Activated CD4-positive, alpha-beta T cell treated with anti-CD3 and anti-CD28 coated beads, Interleukin-2, amount 10 ng/mL, durations not matched to agents 7 days and 5 days (primary cell): ENCODE measurements at regions of chr2 and their contacts with region 1.

Region 1: GRCh38 chr2:37550190-37550589 is 121.3 kb downstream of the CDC42EP3 start:
- DNase-seq: no peak
- H3K4me3 Mint-ChIP-seq: no peak overlapping the region
- H3K27ac Mint-ChIP-seq: no peak overlapping the region
- H3K4me1 Mint-ChIP-seq: peaks cover 15% of the 10 kb centered on the region
- H3K27me3 Mint-ChIP-seq: no peaks in the 10 kb centered on the region

Region 2: GRCh38 chr2:37561615-37562569 is 11.7 kb after region 1 on chr2:
- CTCF ChIA-PET with region 1: interaction called, 19 read pairs
- POLR2A ChIA-PET with region 1: no interaction called
- DNase-seq: no peak
- H3K4me3 Mint-ChIP-seq: no peak overlapping the region
- H3K27ac Mint-ChIP-seq: no peak overlapping the region
- H3K4me1 Mint-ChIP-seq: peaks cover 20% of the 10 kb centered on the region
- H3K27me3 Mint-ChIP-seq: no peaks in the 10 kb centered on the region